Left colon (tissue), 2 donors: ENCODE measurements at regions of chr1 and their contacts with region 1.

Region 1: GRCh38 chr1:167533851-167534300 is 15.5 kb upstream of the CD247 start:
- DNase-seq: peak; percentile 34 to 67
- ATAC-seq: peak; percentile 91

Region 2: DNA sequence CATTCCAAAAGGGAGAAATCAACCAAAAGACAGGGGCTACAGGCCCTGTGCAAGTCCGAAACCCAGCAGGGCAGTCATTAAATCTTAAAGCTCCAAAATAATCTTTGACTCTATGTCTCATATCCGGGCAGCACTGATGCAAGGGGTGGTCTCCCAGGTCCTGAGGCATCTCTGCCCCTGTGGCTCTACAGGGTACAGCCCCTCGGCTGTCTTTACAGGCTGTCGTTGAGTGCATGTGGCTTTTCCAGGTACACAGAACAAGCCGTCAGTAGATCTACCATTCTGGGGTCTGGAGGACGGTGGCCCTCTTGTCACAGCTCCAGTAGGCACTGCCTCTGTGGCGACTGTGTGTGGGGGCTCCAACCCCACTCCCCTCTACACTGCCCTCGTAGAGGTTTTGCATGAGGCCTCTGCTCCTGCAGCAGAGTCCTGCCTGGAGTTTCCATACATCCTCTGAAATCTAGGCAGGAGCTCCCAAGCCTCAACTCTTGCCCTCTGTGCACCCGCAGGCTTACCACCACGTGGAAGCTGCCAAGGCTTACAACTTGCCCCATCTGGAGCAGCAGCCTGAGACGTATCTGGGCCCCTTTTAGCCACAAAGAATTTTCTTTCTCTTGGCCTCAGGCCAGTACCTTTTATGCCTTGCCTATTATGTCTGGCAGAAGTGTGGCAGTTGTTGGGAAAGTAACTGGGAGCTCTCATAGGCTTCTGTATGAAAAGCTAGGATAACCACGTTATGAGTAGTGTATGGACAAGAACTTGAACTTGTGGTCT is 260.7 kb before region 1 on chr1:
- intact Hi-C with region 1: loop called in 1 of 2 experiments (anchors 10 kb)
- DNase-seq: no peak
- ATAC-seq: peak; percentile 22

Region 3: GRCh38 chr1:167454894-167455785 is 78.7 kb before region 1 on chr1:
- intact Hi-C with region 1: loop called in 1 of 2 experiments (anchors 10 kb)
- DNase-seq: peak; percentile 66 to 82
- ATAC-seq: peak; percentile 86

Region 4: DNA sequence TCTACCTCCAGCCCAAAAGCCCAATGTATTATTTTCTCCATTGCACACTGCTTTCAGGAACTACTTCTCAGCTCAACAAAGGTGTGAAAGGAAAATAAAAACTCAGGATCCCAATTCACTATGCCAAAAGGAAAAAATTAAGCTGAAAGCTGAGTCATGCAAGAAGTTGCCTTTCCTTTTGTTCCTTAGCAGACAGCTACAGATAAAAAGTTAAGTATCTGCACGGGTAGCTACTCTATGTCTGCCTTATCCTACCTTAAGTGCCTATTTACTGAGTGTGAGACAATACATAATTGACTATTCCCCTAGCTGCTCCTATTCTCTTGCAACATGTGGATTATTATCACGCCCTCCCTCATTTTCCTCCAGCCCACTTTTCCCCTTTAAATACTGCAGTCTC is 296.0 kb after region 1 on chr1:
- intact Hi-C with region 1: no loop called
- DNase-seq: no peak
- ATAC-seq: no peak

Region 5: GRCh38 chr1:167973832-167974231 is 440.0 kb after region 1 on chr1:
- intact Hi-C with region 1: no loop called
- DNase-seq: no peak
- ATAC-seq: no peak